ENCODE measurements at regions of chr9 and their contacts with region 1.

Region 1: GRCh38 chr9:76302947-76303940 is 91.0 kb downstream of the RFK start:
- DNase-seq: peak; percentile 21
- H3K4me3 Mint-ChIP-seq: no peak overlapping the region
- H3K27ac Mint-ChIP-seq: no peak overlapping the region
- H3K4me1 Mint-ChIP-seq: no peaks in the 10 kb centered on the region
- H3K27me3 Mint-ChIP-seq: peaks cover 11% of the 10 kb centered on the region

Region 2: DNA sequence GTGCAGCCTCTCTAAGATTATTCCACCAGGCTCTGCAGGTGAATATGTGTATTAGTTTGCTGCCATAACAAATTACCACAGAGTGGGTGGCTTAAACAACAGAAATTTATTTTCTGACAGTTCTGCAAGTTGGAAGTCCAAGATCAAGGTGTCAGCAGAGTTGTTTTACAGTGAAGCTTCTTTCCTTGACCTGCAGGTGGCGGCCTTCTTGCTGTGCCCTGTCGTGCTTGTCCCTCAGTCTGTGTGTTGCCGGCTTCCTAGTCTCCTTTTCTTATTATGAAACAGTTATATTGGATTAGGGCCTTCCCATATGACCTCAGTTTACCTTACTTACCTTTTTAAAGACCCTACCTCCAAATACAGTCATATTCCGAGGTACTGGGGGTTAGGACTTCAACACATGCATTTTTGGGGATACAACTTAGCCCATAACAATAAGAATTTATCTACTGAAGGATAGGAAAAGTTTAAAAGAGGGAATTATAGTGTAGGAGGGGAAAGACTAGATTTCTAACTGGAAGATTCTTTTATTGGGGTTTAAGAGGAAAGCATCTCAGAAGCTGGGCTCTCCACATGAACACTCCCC is 1117.6 kb before region 1 on chr9:
- CTCF ChIA-PET with region 1: no interaction called
- intact Hi-C with region 1: loop called (anchors 5 kb)
- DNase-seq: peak; percentile 72
- H3K4me3 Mint-ChIP-seq: no peak overlapping the region
- H3K27ac Mint-ChIP-seq: no peak overlapping the region
- H3K4me1 Mint-ChIP-seq: peaks cover 16% of the 10 kb centered on the region
- H3K27me3 Mint-ChIP-seq: no peaks in the 10 kb centered on the region

Region 3: DNA sequence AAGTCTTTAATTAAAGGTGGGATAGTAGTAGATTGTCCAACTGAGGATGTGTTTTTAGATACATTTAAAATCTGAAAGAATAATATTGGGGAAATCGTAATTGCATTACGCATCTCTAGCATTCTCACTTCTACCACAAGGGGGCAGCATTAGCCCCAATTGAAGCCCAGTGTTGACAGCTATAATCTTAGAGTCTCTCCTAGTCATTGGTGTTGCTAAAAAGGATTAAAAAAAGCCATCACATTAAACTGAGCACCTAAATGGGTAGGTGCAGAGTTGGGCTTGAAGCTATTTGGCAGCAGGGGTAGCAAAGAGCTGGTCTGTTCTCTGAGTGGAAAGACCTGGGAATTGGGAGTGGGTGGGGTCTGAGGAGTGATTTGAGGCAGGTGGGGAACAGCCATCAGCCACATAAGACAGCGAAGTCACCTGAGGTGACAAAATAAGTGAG is 1037.7 kb before region 1 on chr9:
- CTCF ChIA-PET with region 1: interaction called, 4 read pairs
- intact Hi-C with region 1: loop called (anchors 2 kb)
- DNase-seq: peak; percentile 71
- H3K4me3 Mint-ChIP-seq: no peak overlapping the region
- H3K27ac Mint-ChIP-seq: no peak overlapping the region
- H3K4me1 Mint-ChIP-seq: no peaks in the 10 kb centered on the region
- H3K27me3 Mint-ChIP-seq: no peaks in the 10 kb centered on the region

Region 4: GRCh38 chr9:75866273-75866871 is 436.9 kb before region 1 on chr9:
- CTCF ChIA-PET with region 1: interaction called, 6 read pairs
- intact Hi-C with region 1: loop called (anchors 2 kb)
- DNase-seq: peak; percentile 75
- H3K4me3 Mint-ChIP-seq: no peak overlapping the region
- H3K27ac Mint-ChIP-seq: no peak overlapping the region
- H3K4me1 Mint-ChIP-seq: peaks cover 15% of the 10 kb centered on the region
- H3K27me3 Mint-ChIP-seq: no peaks in the 10 kb centered on the region

Region 5: GRCh38 chr9:76292246-76292645 is 11.0 kb before region 1 on chr9:
- CTCF ChIA-PET with region 1: interaction called, 33 read pairs
- intact Hi-C with region 1: no loop called
- DNase-seq: no peak
- H3K4me3 Mint-ChIP-seq: no peak overlapping the region
- H3K27ac Mint-ChIP-seq: no peak overlapping the region
- H3K4me1 Mint-ChIP-seq: no peaks in the 10 kb centered on the region
- H3K27me3 Mint-ChIP-seq: no peaks in the 10 kb centered on the region